Dorsolateral prefrontal cortex (tissue), 120 donors: ENCODE measurements at regions of chr1 and their contacts with region 1.

Region 1: DNA sequence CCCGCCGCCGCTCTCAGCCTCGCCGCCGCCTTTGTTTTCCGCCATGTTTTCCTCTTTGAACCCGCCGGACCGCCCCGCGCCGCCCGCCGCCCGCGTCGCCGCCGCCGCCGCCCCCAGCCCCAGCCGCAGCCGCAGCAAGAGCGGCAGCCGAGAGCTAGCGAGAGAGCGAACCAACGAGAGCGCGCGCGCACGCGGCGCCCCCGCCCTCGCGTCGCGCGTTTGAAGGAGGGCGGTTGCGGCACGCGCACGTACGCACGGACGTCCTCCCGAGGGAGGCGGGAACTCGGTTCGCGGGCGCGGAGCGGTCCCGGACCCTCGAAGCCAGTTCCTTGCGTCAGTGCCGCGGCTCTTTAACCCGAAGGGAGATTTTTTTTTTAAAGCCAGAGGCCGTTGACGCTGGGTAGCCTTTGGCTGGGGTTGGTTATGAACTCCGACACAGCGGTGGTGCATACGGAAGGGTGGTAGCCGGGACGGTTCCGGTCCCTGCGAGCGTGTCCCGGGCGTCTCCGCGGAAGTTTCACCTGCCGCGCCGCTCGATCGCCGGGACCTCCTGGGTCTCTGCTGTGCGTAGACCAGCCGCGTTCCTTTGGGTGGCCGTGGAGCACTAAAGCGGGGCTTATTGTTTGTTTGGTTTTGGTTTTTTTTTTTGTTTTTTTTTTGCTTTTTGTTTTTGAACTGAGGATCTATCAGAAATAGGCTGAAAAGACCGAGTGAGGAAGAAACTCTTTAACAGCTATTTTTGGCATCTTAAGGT is at the start of gene TRIM33:
- DNase-seq: peak; percentile 76 to 93 (median 88)
- H3K4me3 ChIP-seq: peak within 1 kb of the TSS; percentile 54 to 100 (median 94)
- H3K27ac ChIP-seq: peak within 1 kb of the TSS; percentile 38 to 99 (median 95)
- H3K27me3 ChIP-seq: no peaks in the 10 kb centered on the region
- CTCF ChIP-seq: peak in 23 of 56 donors; percentile 2 to 53 (median 21)
- total RNA-seq, gene TRIM33: 39.0 to 71.8 (median 55.0) TPM

Region 2: DNA sequence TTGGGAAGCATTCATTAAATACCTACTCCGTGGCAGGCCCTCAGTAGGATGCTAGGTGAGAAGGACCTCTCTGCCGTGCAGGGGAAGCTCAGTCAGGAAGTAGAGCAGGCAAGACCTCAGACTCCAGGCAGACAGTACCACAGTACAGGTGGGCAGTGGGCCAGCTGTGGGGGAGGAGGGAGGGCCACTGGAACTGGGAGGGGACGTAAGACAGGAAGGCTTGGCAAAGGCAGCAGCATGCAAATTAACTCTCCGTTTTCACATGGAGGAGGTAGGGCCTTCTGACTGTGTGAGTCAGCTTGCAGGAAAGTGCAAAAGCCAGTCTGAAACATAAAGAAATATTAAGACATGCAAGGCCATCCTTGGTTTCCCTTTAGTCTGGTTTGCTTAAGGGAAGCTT is 157.9 kb before region 1 on chr1:
- intact Hi-C with region 1: loop called (anchors 5 kb)
- DNase-seq: peak in 7 of 10 donors; percentile 39 to 72 (median 61)
- H3K4me3 ChIP-seq: no peak overlapping the region
- H3K27ac ChIP-seq: peak overlapping the region in 43 of 59 donors; percentile 24 to 93 (median 56)
- H3K27me3 ChIP-seq: no peaks in the 10 kb centered on the region
- CTCF ChIP-seq: no peak

Region 3: GRCh38 chr1:114569006-114569405 is 57.8 kb after region 1 on chr1:
- intact Hi-C with region 1: loop called in 1 of 2 experiments (anchors 5 kb)
- DNase-seq: no peak
- H3K4me3 ChIP-seq: no peak overlapping the region
- H3K27ac ChIP-seq: no peak overlapping the region
- H3K27me3 ChIP-seq: no peaks in the 10 kb centered on the region
- CTCF ChIP-seq: no peak

Region 4: DNA sequence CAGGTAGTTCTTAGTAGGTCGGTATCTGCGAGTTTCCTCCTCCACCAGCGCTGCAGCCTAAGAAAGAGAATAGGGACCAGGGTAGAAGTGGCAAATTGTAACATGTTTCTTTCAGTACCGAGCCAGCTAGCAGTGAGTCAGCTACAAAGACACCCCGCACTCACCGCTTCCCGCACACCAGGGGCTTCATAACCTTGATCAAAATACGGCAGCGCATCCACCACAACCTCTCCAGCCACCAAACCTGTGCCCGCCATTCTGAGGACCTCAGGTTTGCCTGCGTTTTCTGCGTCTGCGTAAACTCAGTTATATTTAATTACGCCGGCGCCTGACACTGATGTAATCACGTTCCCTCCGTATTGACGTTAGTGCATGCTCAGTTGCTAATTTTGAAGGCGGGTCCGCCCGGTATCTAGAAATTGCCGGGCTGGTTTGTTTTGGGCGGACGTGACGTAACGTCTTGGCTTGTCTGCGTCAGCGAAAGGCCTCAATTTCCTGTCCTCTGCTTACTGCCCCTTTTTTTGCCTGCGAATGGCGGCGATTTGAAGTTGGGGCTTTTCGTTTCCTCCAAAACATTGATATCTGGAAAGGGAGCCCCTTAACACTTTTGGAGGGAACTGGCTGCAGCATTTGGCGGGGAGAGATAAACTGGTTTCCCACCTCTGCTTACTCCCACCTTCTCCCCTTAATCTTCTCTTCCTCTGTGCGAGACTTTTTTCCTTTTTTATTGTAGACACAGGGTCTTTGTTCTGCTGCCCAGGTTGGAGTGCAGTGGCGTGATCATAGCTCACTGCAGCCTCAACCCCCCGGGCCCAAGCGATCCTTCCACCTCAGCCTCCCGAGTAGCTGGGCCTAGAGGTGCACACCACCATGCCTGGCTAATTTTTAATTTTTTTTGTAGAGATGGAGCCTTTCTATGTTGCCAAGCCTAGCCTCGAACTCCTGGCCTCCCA is 70.4 kb after region 1 on chr1 and contains the start of gene BCAS2:
- intact Hi-C with region 1: loop called (anchors 2 to 5 kb)
- DNase-seq: peak; percentile 92 to 99 (median 96)
- H3K4me3 ChIP-seq: peak within 1 kb of the TSS; percentile 50 to 99 (median 80)
- H3K27ac ChIP-seq: peak within 1 kb of the TSS; percentile 57 to 98 (median 91)
- H3K27me3 ChIP-seq: no peaks in the 10 kb centered on the region
- CTCF ChIP-seq: peak in 22 of 56 donors; percentile 5 to 32 (median 18)
- total RNA-seq, gene BCAS2: 20.3 to 90.8 (median 49.2) TPM

Region 5: GRCh38 chr1:114716304-114717170 is 205.3 kb after region 1 on chr1 and contains the start of gene NRAS:
- intact Hi-C with region 1: loop called in 1 of 2 experiments (anchors 5 kb)
- DNase-seq: peak; percentile 75 to 96 (median 93)
- H3K4me3 ChIP-seq: peak within 1 kb of the TSS; percentile 64 to 100 (median 91)
- H3K27ac ChIP-seq: peak within 1 kb of the TSS in 56 of 59 donors; percentile 20 to 94 (median 80)
- H3K27me3 ChIP-seq: no peaks in the 10 kb centered on the region
- CTCF ChIP-seq: peak in 29 of 56 donors; percentile 5 to 44 (median 22)
- total RNA-seq, gene NRAS: 10.6 to 20.9 (median 16.0) TPM

Region 6: GRCh38 chr1:114757455-114758250 is 246.4 kb after region 1 on chr1 and contains the start of gene CSDE1:
- intact Hi-C with region 1: loop called (anchors 2 kb)
- DNase-seq: peak; percentile 93 to 98 (median 96)
- H3K4me3 ChIP-seq: peak within 1 kb of the TSS; percentile 66 to 100 (median 95)
- H3K27ac ChIP-seq: peak within 1 kb of the TSS; percentile 95 to 100 (median 99)
- H3K27me3 ChIP-seq: no peaks in the 10 kb centered on the region
- CTCF ChIP-seq: peak in 41 of 56 donors; percentile 3 to 50 (median 27)
- total RNA-seq, gene CSDE1: 340 to 487 (median 404) TPM